ENCODE measurements at regions of chr2 and their contacts with region 1.

Region 1: GRCh38 chr2:224278531-224278930 is 123.4 kb downstream of the FAM124B start:
- DNase-seq: no peak
- H3K4me3 ChIP-seq: no peak overlapping the region
- H3K4me3 Mint-ChIP-seq: no peak overlapping the region
- H3K27ac Mint-ChIP-seq: no peak overlapping the region
- H3K4me1 ChIP-seq: peaks cover 4% of the 10 kb centered on the region
- H3K4me1 Mint-ChIP-seq: no peaks in the 10 kb centered on the region
- H3K27me3 ChIP-seq: no peaks in the 10 kb centered on the region
- H3K27me3 Mint-ChIP-seq: peaks cover 3% of the 10 kb centered on the region
- CTCF ChIP-seq: no peak

Region 2: GRCh38 chr2:224221455-224221913 is 57.0 kb before region 1 on chr2:
- CTCF ChIA-PET with region 1: no interaction called
- POLR2A ChIA-PET with region 1: no interaction called
- intact Hi-C with region 1: loop called (anchors 5 kb)
- DNase-seq: no peak
- H3K4me3 ChIP-seq: no peak overlapping the region
- H3K4me3 Mint-ChIP-seq: no peak overlapping the region
- H3K27ac Mint-ChIP-seq: no peak overlapping the region
- H3K4me1 ChIP-seq: no peaks in the 10 kb centered on the region
- H3K4me1 Mint-ChIP-seq: no peaks in the 10 kb centered on the region
- H3K27me3 ChIP-seq: no peaks in the 10 kb centered on the region
- H3K27me3 Mint-ChIP-seq: peaks cover 11% of the 10 kb centered on the region
- CTCF ChIP-seq: no peak

Region 3: DNA sequence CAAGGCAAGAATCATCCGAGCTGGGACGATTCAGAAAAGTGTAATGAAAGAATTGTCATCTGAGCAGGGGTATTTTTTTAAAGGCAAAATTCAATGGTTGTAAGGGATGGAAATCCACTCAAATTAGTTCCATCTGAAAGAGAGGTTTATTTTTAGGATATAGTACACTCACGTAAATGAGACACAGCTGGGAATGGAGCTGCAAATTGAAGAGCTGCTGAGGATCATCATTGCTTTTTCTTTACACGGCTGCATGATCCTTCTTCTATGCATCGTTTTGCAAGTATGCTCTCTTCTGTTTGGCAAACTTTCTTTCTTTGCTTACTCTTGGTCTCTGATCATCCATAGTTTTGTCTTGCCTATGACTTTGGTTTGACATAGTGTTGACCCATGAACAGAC is 334.0 kb after region 1 on chr2:
- CTCF ChIA-PET with region 1: no interaction called
- POLR2A ChIA-PET with region 1: no interaction called
- intact Hi-C with region 1: no loop called
- DNase-seq: no peak
- H3K4me3 ChIP-seq: no peak overlapping the region
- H3K4me3 Mint-ChIP-seq: no peak overlapping the region
- H3K27ac Mint-ChIP-seq: no peak overlapping the region
- H3K4me1 ChIP-seq: no peaks in the 10 kb centered on the region
- H3K4me1 Mint-ChIP-seq: no peaks in the 10 kb centered on the region
- H3K27me3 ChIP-seq: no peaks in the 10 kb centered on the region
- H3K27me3 Mint-ChIP-seq: no peaks in the 10 kb centered on the region
- CTCF ChIP-seq: no peak